ENCODE measurements at regions of chr2 and their contacts with region 1.

Region 1: DNA sequence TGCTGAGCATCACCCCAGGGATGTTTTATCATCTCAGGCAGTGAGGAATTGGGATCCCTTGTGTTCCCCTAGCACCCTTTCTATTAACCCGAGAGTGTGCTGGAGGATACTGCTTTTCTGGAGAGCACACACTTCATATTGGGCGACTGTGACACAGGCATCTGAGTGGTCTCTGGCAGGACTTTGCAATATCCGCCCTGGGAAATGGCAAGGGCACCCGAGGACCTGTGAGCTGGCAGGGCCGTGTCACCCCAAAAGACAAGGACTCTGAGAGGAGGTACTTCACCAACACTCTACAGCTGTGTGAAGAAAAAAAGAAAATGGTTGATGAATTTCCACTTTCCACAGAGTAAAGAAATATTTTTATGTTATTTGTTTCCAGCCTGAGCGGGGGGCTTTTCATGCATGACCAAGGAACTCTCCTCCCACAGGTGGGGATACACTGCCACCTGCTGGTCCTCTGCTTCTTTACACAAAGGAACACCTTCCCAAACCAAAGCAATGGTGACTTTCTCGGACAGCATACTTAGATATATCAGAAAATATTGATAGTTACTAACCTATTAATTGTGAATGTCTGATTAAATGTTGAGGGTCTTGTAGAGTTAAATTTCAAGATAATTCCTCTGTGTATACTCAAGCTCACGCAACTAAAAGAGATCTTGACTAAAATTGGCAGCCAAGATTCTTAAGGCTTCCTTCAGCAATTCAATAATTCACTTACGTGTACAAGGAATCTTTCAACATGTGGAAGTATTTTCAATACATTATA is 45.9 kb upstream of the REG3G start:
- DNase-seq: peak; percentile 55 to 77 (median 68)
- H3K4me3 ChIP-seq: no peak overlapping the region
- H3K27ac ChIP-seq: no peak overlapping the region
- H3K4me1 ChIP-seq: peaks cover 0 to 11% (median 10%) of the 10 kb centered on the region in 4 experiments
- H3K27me3 ChIP-seq: peaks cover 0 to 11% (median 8%) of the 10 kb centered on the region in 5 experiments

Region 2: DNA sequence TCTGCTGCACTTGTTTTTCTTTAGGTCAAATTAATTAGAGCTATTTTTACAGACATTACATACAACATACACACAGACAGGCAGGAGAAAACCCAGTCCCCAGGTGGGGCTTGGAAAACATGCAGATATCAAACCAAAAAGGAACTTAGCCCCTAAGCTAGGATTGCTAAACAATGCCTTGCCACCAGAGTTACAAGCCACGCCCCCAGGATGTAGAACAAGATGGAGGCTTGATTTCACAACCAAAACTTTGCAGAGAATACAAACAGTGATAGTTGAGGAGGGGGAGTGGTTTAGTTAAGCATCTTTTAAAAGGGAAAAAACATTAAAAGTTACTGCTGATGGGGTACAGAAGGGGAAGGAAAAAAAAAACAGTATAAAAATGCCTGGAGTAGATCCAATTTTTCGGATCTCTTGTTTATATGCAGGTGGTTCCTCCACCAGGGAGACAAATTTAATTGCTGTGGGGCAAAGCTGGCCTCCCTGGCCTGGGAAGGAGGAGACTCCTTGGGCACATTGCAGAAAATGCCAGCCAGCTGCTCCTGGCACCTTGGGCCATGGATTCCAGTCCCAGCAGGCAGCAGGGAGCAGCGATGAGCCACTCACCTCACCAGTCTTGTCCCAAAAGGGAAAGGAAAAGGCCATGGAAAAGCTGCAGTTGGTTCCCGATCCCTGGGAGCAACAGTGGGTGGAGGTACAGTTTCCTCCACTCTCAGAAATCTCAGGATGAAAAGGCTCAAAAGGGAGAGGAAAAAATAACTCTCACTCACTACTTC is 302.5 kb before region 1 on chr2:
- CTCF ChIA-PET with region 1: interaction called, 30 read pairs
- POLR2A ChIA-PET with region 1: no interaction called
- DNase-seq: peak in 1 of 3 donors; percentile 4
- H3K4me3 ChIP-seq: no peak overlapping the region
- H3K27ac ChIP-seq: no peak overlapping the region
- H3K4me1 ChIP-seq: peaks cover 0 to 4% (median 0%) of the 10 kb centered on the region in 4 experiments
- H3K27me3 ChIP-seq: peaks cover 0 to 1% (median 0%) of the 10 kb centered on the region in 5 experiments

Region 3: GRCh38 chr2:78999406-78999805 is 19.8 kb after region 1 on chr2:
- CTCF ChIA-PET with region 1: interaction called, 11 read pairs
- POLR2A ChIA-PET with region 1: no interaction called
- DNase-seq: peak; percentile 14 to 45 (median 44)
- H3K4me3 ChIP-seq: no peak overlapping the region
- H3K27ac ChIP-seq: no peak overlapping the region
- H3K4me1 ChIP-seq: no peaks in the 10 kb centered on the region
- H3K27me3 ChIP-seq: peaks cover 3 to 24% (median 9%) of the 10 kb centered on the region in 5 experiments

Region 4: GRCh38 chr2:79327460-79327859 is 347.9 kb after region 1 on chr2:
- CTCF ChIA-PET with region 1: no interaction called
- POLR2A ChIA-PET with region 1: no interaction called
- DNase-seq: no peak
- H3K4me3 ChIP-seq: no peak overlapping the region
- H3K27ac ChIP-seq: no peak overlapping the region
- H3K4me1 ChIP-seq: no peaks in the 10 kb centered on the region
- H3K27me3 ChIP-seq: peaks cover 0 to 2% (median 0%) of the 10 kb centered on the region in 5 experiments